Activated CD4-positive, alpha-beta T cell treated with anti-CD3 and anti-CD28 coated beads for 36 hours (primary cell): ENCODE measurements at regions of chr2 and their contacts with region 1.

Region 1: DNA sequence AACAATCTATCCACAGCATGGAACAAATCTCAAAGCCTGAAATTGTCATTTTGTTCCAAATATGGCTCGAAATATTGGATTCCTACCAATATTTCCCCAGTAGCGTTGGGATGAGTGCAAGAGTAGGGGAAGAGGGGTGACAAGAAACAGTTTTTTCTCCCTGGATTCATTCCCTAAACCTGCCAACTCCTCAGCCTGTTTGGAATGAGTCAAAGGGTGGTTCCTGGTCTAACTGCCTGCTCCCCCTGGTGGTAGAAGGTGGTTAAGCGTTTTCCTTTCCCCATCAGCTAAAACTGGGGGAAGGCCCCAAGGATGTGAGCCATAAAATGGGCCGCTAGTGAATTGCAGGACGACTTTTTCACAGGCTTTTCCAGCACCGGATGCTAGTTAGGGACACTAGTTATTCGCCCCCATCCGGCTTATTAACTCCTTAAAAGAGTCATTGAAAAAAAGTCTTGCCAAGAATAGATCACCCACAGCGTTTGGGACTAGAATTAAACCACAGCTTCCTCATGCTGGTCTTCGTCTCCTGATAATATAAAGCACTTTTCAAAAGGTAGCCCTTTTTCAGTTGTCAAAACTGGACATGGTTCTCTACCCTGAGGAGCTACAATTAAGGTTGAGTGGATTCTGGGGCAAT is 72.5 kb downstream of the DHRS9 start:
- DNase-seq: peak; percentile 75
- ATAC-seq: peak; percentile 85
- H3K4me3 Mint-ChIP-seq: no peak overlapping the region
- H3K27ac Mint-ChIP-seq: no peak overlapping the region
- H3K4me1 Mint-ChIP-seq: no peaks in the 10 kb centered on the region
- H3K27me3 Mint-ChIP-seq: no peaks in the 10 kb centered on the region

Region 2: GRCh38 chr2:167310442-167310841 is 1831.4 kb before region 1 on chr2:
- CTCF ChIA-PET with region 1: no interaction called
- POLR2A ChIA-PET with region 1: no interaction called
- intact Hi-C with region 1: no loop called
- DNase-seq: no peak
- ATAC-seq: no peak
- H3K4me3 Mint-ChIP-seq: no peak overlapping the region
- H3K27ac Mint-ChIP-seq: no peak overlapping the region
- H3K4me1 Mint-ChIP-seq: no peaks in the 10 kb centered on the region
- H3K27me3 Mint-ChIP-seq: peaks cover 4% of the 10 kb centered on the region

Region 3: GRCh38 chr2:169159686-169160085 is 17.9 kb after region 1 on chr2:
- CTCF ChIA-PET with region 1: interaction called, 20 read pairs
- POLR2A ChIA-PET with region 1: no interaction called
- intact Hi-C with region 1: no loop called
- DNase-seq: no peak
- ATAC-seq: no peak
- H3K4me3 Mint-ChIP-seq: no peak overlapping the region
- H3K27ac Mint-ChIP-seq: no peak overlapping the region
- H3K4me1 Mint-ChIP-seq: no peaks in the 10 kb centered on the region
- H3K27me3 Mint-ChIP-seq: peaks cover 6% of the 10 kb centered on the region